Vagina (tissue), 2 donors: ENCODE measurements at regions of chr13 and their contacts with region 1.

Region 1: GRCh38 chr13:30132623-30133553 is 174.5 kb downstream of the KATNAL1 start:
- DNase-seq: peak in 1 of 2 donors; percentile 96
- H3K4me3 ChIP-seq: no peak overlapping the region
- H3K27ac ChIP-seq: peak overlapping the region; percentile 71
- H3K4me1 ChIP-seq: peaks cover 27% of the 10 kb centered on the region
- H3K27me3 ChIP-seq: no peaks in the 10 kb centered on the region
- CTCF ChIP-seq: peak; percentile 83 to 96 (median 87)
- POLR2A ChIP-seq: no peak

Region 2: GRCh38 chr13:29902101-29902952 is 230.6 kb before region 1 on chr13:
- intact Hi-C with region 1: no loop called
- DNase-seq: peak in 1 of 2 donors; percentile 81
- H3K4me3 ChIP-seq: no peak overlapping the region
- H3K27ac ChIP-seq: peak overlapping the region; percentile 36
- H3K4me1 ChIP-seq: peaks cover 25% of the 10 kb centered on the region
- H3K27me3 ChIP-seq: no peaks in the 10 kb centered on the region
- CTCF ChIP-seq: no peak
- POLR2A ChIP-seq: no peak

Region 3: DNA sequence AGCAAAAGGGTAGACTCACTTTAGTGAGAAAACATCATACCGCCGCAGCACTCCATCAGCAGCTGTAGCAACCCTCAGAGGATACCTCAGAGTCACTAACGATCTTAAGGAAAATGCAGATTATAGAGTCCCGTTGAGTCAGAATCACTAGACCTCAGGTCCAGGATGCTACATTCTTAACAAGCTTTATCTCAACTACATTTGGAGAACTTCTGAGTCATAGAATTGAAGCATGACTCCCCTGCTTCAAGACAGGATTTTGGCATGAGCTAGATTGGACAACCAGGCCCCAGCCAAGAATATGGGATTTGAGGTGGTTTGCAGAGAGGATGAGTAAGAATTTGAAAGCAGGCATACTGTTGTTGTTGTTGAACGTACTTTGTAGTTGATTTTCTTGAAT is 163.6 kb before region 1 on chr13:
- intact Hi-C with region 1: no loop called
- DNase-seq: no peak
- H3K4me3 ChIP-seq: no peak overlapping the region
- H3K27ac ChIP-seq: no peak overlapping the region
- H3K4me1 ChIP-seq: no peaks in the 10 kb centered on the region
- H3K27me3 ChIP-seq: no peaks in the 10 kb centered on the region
- CTCF ChIP-seq: no peak
- POLR2A ChIP-seq: no peak

Region 4: GRCh38 chr13:30792285-30793000 is 659.6 kb after region 1 on chr13:
- intact Hi-C with region 1: loop called (anchors 10 kb)
- DNase-seq: no peak
- H3K4me3 ChIP-seq: no peak overlapping the region
- H3K27ac ChIP-seq: peak overlapping the region; percentile 75
- H3K4me1 ChIP-seq: peaks cover 28% of the 10 kb centered on the region
- H3K27me3 ChIP-seq: no peaks in the 10 kb centered on the region
- CTCF ChIP-seq: peak in 1 of 3 experiments; percentile 27
- POLR2A ChIP-seq: no peak